Posterior cingulate gyrus (tissue), 11 donors: ENCODE measurements at regions of chr7 and their contacts with region 1.

Region 1: GRCh38 chr7:107147464-107148393 is 21.1 kb upstream of the HBP1 start:
- DNase-seq: peak in 5 of 10 donors; percentile 26 to 86 (median 55)

Region 2: DNA sequence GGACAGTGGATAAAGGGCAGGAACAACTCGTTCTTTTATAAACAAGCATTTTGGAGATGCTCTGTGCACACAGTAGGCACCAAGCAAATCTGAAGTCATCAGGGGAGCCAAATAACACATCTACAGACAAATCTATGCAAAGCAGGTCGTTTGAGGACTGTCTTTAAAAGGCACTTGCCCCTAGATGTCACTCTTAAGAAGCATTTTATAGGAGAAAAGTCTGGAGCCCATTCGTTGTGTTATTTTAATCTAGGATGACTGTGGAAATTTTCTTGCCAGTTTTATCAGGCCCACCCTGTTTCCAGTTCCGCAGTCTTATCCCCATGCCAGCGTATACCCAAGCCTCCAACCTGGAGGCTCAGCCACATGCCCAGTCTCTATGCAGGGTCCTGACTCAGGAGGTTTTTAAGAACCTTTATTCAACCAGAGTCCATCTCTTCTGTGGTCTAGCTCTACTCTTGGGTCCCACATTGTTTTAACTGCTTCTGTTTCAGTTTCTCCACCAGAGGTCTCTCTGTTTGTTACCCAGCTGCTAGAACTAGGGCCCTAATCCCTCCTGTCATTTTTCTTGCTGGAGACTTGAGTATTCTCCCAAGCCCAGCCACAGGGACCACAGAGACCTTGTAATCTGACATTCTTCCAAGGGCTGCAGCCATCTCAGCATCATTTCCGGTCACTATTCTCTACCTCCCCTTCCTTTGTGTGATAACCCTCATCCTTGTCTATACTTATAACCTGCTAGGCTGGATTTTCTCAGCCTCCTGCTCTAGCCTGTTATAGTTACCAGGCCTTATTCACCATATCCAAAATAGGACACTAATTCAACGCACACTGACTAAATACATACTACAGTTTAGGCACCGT is 255.9 kb before region 1 on chr7:
- intact Hi-C with region 1: loop called (anchors 5 kb)
- DNase-seq: no peak

Region 3: GRCh38 chr7:106947244-106947728 is 200.4 kb before region 1 on chr7:
- intact Hi-C with region 1: loop called (anchors 1 kb)
- DNase-seq: peak in 4 of 10 donors; percentile 22 to 41 (median 36)

Region 4: GRCh38 chr7:107025449-107026103 is 122.2 kb before region 1 on chr7:
- intact Hi-C with region 1: no loop called
- DNase-seq: no peak